Psoas muscle (tissue), 8 donors: ENCODE measurements at regions of chr18 and their contacts with region 1.

Region 1: GRCh38 chr18:34880882-34881834 is 160.1 kb upstream of the MAPRE2 start:
- DNase-seq: no peak
- ATAC-seq: peak; percentile 84 to 96 (median 91)
- H3K4me3 ChIP-seq: no peak overlapping the region
- H3K27ac ChIP-seq: peak overlapping the region; percentile 72
- H3K4me1 ChIP-seq: peaks cover 15% of the 10 kb centered on the region
- H3K27me3 ChIP-seq: no peaks in the 10 kb centered on the region
- CTCF ChIP-seq: peak; percentile 42

Region 2: DNA sequence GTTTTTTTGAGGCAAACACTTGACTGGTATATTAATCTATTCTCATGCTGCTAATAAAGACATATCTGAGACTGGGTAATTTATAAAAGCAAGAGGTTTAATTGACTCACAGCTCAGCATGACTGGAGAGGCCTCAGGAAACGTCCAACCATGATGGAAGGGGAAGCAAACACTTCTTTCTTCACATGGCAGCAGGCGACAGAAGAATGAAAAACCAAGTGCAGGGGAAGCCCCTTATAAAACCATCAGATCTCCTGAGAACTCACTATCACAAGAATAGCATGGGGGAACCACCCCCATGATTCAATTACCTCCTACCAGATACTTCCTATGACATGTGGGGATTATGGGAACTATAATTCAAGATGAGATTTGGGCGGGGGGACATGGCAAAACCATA is 23.8 kb after region 1 on chr18:
- intact Hi-C with region 1: loop called in 1 of 2 experiments (anchors 2 kb)
- DNase-seq: no peak
- ATAC-seq: no peak
- H3K4me3 ChIP-seq: peak overlapping the region; percentile 53
- H3K27ac ChIP-seq: peak overlapping the region; percentile 91
- H3K4me1 ChIP-seq: peaks cover 36% of the 10 kb centered on the region
- H3K27me3 ChIP-seq: no peaks in the 10 kb centered on the region
- CTCF ChIP-seq: no peak

Region 3: GRCh38 chr18:34976899-34977837 is 96.0 kb after region 1 on chr18:
- intact Hi-C with region 1: loop called (anchors 5 to 10 kb)
- DNase-seq: peak; percentile 87 to 92
- ATAC-seq: peak; percentile 80 to 89 (median 84)
- H3K4me3 ChIP-seq: peak overlapping the region; percentile 95
- H3K27ac ChIP-seq: peak overlapping the region; percentile 99
- H3K4me1 ChIP-seq: peaks cover 42% of the 10 kb centered on the region
- H3K27me3 ChIP-seq: no peaks in the 10 kb centered on the region
- CTCF ChIP-seq: no peak

Region 4: GRCh38 chr18:35122586-35123224 is 241.5 kb after region 1 on chr18:
- intact Hi-C with region 1: loop called in 1 of 2 experiments (anchors 10 kb)
- DNase-seq: peak; percentile 60 to 77
- ATAC-seq: peak; percentile 65 to 82 (median 81)
- H3K4me3 ChIP-seq: no peak overlapping the region
- H3K27ac ChIP-seq: peak overlapping the region; percentile 48
- H3K4me1 ChIP-seq: peaks cover 62% of the 10 kb centered on the region
- H3K27me3 ChIP-seq: no peaks in the 10 kb centered on the region
- CTCF ChIP-seq: peak; percentile 37

Region 5: DNA sequence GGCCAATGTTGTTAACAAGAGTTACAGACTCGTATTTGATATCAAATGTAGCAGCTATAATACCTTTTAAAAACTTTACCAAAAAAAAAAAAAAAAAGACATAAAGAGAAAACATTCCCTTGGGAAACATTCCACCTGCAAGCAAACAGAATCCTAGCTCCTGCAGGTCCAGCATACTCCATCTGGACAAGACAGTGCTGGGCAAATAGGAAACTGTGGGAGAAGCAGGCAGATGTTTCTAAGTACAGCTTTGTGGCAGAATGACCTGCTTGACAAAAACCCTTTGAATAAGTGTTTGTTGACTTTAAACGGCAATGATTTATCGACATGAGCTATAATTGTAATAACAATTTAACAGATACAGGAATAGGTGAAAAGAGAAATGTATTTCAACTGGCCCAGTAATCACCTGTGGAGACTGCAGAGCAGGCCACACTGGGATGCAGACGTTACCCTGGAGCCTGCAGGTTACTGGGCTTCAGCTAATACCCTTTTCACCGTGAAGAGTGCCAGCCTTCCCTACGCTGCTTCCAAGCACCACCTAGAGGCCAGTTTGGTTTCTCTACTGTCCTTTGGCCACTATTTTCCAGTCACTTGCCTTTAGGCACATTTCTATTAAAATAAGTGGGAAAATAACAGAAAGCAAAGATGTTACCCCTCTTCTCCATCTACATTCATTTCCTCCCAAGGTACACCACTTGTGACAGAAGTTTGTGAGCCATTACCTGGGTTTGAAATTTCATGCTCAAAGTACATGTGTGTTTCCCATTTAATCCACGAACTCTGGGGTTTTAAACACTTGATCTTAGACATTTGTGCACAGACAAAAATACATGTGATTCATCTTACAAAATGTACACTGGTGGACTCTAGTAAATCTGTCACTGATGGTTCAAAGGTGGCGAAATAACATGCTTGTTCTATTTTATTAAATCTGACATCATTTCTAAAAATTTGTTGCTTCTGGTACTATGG is 262.8 kb after region 1 on chr18:
- intact Hi-C with region 1: loop called in 1 of 2 experiments (anchors 5 kb)
- DNase-seq: peak; percentile 44 to 65
- ATAC-seq: peak; percentile 87 to 96 (median 92)
- H3K4me3 ChIP-seq: no peak overlapping the region
- H3K27ac ChIP-seq: no peak overlapping the region
- H3K4me1 ChIP-seq: no peaks in the 10 kb centered on the region
- H3K27me3 ChIP-seq: no peaks in the 10 kb centered on the region
- CTCF ChIP-seq: peak; percentile 76